Activated T-helper 2 cell treated with anti-CD3 and anti-CD28 coated beads, Interferon-gamma antibody, Interleukin-2, Interleukin-4, amounts not matched to agents 10 μg/mL and 5 μg/mL and 100 μg/mL, durations not matched to agents 14 hours and 24 hours and 36 hours (primary cell): ENCODE measurements at regions of chr12 and their contacts with region 1.

Region 1: DNA sequence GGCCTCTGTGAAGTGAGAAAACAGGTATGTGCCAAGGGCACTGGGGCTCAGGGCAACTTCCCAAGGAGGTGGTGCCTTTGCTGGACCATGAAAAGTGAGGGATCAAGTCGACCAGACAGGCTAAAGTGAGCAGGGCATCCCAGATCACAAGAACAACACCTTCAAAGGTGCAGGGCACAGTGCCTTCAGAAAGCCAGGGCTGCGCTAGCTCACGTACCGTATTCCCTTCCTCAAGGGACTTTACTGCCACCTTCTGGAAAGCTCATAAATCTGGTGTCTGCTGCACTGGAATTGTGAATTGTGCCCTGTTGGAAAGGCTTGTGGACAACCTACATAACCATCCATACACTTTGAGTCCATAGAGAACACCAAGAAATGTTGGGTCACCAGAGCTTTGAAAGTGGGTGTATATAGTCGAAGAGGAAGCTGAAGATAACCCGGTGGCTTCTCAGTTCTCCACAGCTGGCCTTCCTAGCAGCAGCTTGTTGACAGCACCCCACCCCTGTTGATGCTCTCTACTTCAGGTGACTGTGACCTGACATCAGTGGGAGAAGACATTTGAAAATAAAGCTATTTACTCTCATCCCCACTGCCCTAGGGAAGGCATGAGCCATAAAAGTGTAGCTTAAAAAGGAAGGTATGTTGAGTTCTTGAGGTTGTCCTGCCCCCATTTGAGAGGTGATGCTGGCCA is 24.5 kb downstream of the FIGNL2 start:
- DNase-seq: no peak
- H3K4me3 Mint-ChIP-seq: no peak overlapping the region
- H3K27ac Mint-ChIP-seq: no peak overlapping the region
- H3K4me1 Mint-ChIP-seq: peaks cover 20% of the 10 kb centered on the region
- H3K27me3 Mint-ChIP-seq: peaks cover 14% of the 10 kb centered on the region

Region 2: GRCh38 chr12:51590347-51591019 is 233.5 kb before region 1 on chr12:
- intact Hi-C with region 1: loop called (anchors 10 kb)
- DNase-seq: peak; percentile 71
- H3K4me3 Mint-ChIP-seq: peak overlapping the region; percentile 86
- H3K27ac Mint-ChIP-seq: peak overlapping the region; percentile 30
- H3K4me1 Mint-ChIP-seq: peaks cover 7% of the 10 kb centered on the region
- H3K27me3 Mint-ChIP-seq: peaks cover 62% of the 10 kb centered on the region

Region 3: GRCh38 chr12:51994959-51995358 is 170.9 kb after region 1 on chr12:
- intact Hi-C with region 1: no loop called
- DNase-seq: no peak
- H3K4me3 Mint-ChIP-seq: no peak overlapping the region
- H3K27ac Mint-ChIP-seq: no peak overlapping the region
- H3K4me1 Mint-ChIP-seq: peaks cover 5% of the 10 kb centered on the region
- H3K27me3 Mint-ChIP-seq: no peaks in the 10 kb centered on the region